Cardiac septum (tissue), 1 donor: ENCODE measurements at regions of chr11 and their contacts with region 1.

Region 1: GRCh38 chr11:72642884-72643511 is 31.2 kb downstream of the PDE2A start:
- DNase-seq: peak; percentile 84

Region 2: GRCh38 chr11:72483412-72484186 is 159.4 kb before region 1 on chr11:
- intact Hi-C with region 1: loop called (anchors 5 kb)
- DNase-seq: no peak

Region 3: DNA sequence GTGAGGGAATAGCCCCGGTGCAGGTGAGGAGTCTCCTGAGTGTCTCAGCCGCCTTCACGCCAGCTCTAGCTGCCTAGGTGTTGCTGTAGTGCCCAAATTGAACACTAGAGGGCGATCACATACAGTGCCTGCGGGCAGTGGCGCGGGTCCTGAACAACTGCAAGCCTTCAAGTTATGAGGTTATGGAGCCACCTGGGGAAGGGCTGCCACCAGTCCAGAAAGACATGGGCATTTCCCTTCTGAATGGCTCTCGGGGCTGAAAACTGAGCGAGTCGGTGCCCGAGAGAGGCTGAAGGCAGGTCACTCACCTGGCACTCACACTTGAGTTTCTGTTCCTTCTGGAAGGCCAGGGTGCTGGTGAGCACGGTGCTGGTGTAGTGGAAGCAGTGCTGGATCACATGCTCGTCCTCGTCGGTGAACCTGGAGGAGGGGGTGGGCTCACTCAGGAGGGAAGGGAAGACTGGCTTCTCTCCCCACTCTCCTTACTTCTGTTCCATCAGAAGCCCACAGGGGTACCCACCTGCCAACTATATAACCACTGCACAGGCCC is 57.2 kb before region 1 on chr11:
- intact Hi-C with region 1: loop called (anchors 1 kb)
- DNase-seq: no peak

Region 4: DNA sequence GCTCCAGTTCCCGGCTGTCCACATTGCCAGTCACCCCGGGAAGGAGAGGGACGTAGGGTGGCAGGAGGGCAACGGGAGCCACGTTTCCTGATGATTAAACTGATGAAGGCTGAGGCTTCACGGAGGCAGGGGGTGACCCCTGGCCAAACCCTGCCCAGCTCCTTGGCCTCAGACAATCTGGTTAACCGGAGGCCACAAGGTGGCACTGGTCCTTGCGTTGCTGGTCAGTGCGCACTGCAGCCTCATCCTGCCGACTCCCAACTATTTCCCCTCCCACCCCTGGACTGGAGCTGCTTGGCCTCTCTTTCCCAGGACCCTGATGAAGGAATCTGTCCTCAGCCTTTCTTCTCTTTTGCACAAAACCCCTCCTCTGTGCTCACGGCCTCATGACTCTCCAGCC is 44.1 kb before region 1 on chr11:
- intact Hi-C with region 1: loop called (anchors 1 kb)
- DNase-seq: no peak